Naive thymus-derived CD4-positive, alpha-beta T cell (primary cell): ENCODE measurements at regions of chr7 and their contacts with region 1.

Region 1: GRCh38 chr7:6106140-6106904 is 75.1 kb downstream of the ANKRD61 start:
- DNase-seq: peak in 7 of 9 donors; percentile 27 to 57 (median 51)
- ATAC-seq: no peak
- H3K4me3 ChIP-seq: peak overlapping the region; percentile 76
- H3K4me3 Mint-ChIP-seq: peak overlapping the region; percentile 84 to 96 (median 92)
- H3K27ac ChIP-seq: peak overlapping the region; percentile 90
- H3K27ac Mint-ChIP-seq: peak overlapping the region; percentile 87 to 97 (median 93)
- H3K4me1 ChIP-seq: peaks cover 7 to 9% of the 10 kb centered on the region in 2 donors
- H3K4me1 Mint-ChIP-seq: peaks cover 23 to 49% (median 41%) of the 10 kb centered on the region in 7 donors
- H3K27me3 ChIP-seq: no peaks in the 10 kb centered on the region
- H3K27me3 Mint-ChIP-seq: no peaks in the 10 kb centered on the region

Region 2: DNA sequence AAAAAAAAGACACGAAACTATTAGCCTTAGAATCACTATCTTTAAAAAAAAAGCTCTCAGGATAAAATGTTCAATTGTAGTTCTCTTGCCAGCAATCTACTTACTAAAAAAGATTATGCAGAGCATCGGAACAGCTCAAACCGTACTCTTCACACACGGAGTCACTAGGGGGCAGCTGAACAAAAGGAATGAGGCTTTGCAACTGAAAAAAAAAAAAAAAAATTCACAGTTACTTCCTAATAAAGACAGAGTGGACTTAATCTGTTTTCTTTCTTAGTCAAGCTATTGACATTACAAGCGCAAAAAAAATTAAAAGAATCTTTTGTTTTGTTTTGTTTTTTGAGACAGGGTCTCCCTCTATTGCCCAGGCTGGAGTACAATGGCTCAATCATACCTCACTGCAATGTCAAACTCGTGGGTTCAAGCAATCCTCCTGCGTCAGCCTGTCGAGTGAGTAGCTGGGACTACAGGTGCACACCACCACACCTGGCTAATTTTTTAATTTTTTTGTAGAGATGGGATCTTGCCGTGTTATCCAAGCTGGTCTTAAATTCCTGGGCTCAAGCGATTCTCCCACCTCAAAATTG is 109.0 kb before region 1 on chr7:
- CTCF ChIA-PET with region 1: interaction called, 20 read pairs
- POLR2A ChIA-PET with region 1: interaction called, 4 read pairs
- intact Hi-C with region 1: loop called (anchors 1 kb)
- DNase-seq: peak in 7 of 9 donors; percentile 32 to 69 (median 54)
- ATAC-seq: peak; percentile 82
- H3K4me3 ChIP-seq: no peak overlapping the region
- H3K4me3 Mint-ChIP-seq: no peak overlapping the region
- H3K27ac ChIP-seq: no peak overlapping the region
- H3K27ac Mint-ChIP-seq: peak overlapping the region in 4 of 9 donors; percentile 8 to 44 (median 40)
- H3K4me1 ChIP-seq: no peaks in the 10 kb centered on the region
- H3K4me1 Mint-ChIP-seq: peaks cover 0 to 4% (median 0%) of the 10 kb centered on the region in 7 donors
- H3K27me3 ChIP-seq: no peaks in the 10 kb centered on the region
- H3K27me3 Mint-ChIP-seq: no peaks in the 10 kb centered on the region

Region 3: DNA sequence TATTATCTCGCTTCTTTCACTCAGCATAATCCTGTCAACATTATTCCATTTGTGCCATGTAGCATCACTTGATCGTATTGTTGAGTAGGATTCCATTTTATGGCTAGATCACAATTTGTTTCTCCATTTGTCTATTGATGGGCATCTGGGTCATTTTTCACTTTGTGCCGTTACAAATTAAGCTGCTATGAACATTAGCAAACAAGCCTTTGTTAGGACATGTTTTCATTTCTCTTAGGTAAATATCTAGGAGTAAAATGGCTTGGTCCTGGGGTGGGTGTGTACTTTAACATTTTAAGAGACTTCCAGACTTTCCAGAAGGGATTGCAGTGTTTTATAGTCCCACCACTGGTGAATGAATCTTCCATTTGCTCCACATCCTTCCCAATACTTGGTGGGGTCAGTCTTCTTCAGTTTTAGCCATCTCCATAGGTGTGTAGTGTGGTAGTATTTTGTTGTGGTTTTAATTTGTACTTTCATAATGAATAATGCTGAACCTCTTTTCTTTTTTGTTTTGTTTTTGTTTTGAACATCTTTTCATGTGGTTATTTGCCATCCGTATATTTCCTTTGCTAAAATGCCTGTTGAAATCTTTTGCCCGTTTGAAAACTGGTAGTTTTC is 11.1 kb after region 1 on chr7:
- CTCF ChIA-PET with region 1: no interaction called
- POLR2A ChIA-PET with region 1: no interaction called
- intact Hi-C with region 1: loop called in 1 of 2 experiments (anchors 1 kb)
- DNase-seq: no peak
- ATAC-seq: no peak
- H3K4me3 ChIP-seq: no peak overlapping the region
- H3K4me3 Mint-ChIP-seq: peak overlapping the region in 1 of 10 donors; percentile 70
- H3K27ac ChIP-seq: no peak overlapping the region
- H3K27ac Mint-ChIP-seq: peak overlapping the region in 8 of 9 donors; percentile 2 to 84 (median 46)
- H3K4me1 ChIP-seq: peaks cover 0 to 5% of the 10 kb centered on the region in 2 donors
- H3K4me1 Mint-ChIP-seq: peaks cover 14 to 34% (median 15%) of the 10 kb centered on the region in 7 donors
- H3K27me3 ChIP-seq: no peaks in the 10 kb centered on the region
- H3K27me3 Mint-ChIP-seq: no peaks in the 10 kb centered on the region

Region 4: DNA sequence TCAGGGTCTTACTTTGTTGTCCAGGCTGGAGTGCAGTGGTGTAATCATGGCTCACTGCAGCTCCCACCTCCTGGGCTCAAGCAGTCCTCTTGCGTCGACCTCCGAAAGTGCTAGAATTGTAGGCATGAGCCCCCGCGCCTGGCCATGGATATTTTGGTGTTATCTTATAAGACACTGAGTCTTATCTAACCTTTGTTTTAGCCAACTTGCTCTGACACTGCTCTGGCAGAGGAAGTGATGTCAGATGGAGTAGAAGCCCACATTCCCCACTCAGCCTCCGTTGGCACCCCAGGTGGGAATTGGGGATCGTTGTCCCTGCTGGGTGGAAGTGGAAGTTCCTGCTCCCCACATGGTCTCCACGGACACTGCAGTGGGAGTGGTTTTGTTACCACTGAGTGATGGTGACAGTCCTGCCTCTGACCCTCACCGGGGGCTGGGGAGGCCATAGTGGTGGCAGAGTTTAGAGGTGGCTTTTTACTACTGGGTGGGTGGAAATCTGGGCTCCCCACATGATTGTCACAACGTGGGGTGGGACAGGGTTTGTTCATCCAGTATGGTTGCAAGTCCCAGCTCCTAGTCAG is 23.8 kb after region 1 on chr7:
- CTCF ChIA-PET with region 1: no interaction called
- POLR2A ChIA-PET with region 1: no interaction called
- intact Hi-C with region 1: no loop called
- DNase-seq: no peak
- ATAC-seq: no peak
- H3K4me3 ChIP-seq: no peak overlapping the region
- H3K4me3 Mint-ChIP-seq: no peak overlapping the region
- H3K27ac ChIP-seq: no peak overlapping the region
- H3K27ac Mint-ChIP-seq: peak overlapping the region in 3 of 9 donors; percentile 24 to 68 (median 24)
- H3K4me1 ChIP-seq: no peaks in the 10 kb centered on the region
- H3K4me1 Mint-ChIP-seq: peaks cover 5 to 28% (median 9%) of the 10 kb centered on the region in 7 donors
- H3K27me3 ChIP-seq: no peaks in the 10 kb centered on the region
- H3K27me3 Mint-ChIP-seq: no peaks in the 10 kb centered on the region